Activated CD4-positive, alpha-beta memory T cell treated with anti-CD3 and anti-CD28 coated beads, Interleukin-2, amount 10 ng/mL, durations not matched to agents 7 days and 5 days (primary cell): ENCODE measurements at regions of chrX and their contacts with region 1.

Region 1: DNA sequence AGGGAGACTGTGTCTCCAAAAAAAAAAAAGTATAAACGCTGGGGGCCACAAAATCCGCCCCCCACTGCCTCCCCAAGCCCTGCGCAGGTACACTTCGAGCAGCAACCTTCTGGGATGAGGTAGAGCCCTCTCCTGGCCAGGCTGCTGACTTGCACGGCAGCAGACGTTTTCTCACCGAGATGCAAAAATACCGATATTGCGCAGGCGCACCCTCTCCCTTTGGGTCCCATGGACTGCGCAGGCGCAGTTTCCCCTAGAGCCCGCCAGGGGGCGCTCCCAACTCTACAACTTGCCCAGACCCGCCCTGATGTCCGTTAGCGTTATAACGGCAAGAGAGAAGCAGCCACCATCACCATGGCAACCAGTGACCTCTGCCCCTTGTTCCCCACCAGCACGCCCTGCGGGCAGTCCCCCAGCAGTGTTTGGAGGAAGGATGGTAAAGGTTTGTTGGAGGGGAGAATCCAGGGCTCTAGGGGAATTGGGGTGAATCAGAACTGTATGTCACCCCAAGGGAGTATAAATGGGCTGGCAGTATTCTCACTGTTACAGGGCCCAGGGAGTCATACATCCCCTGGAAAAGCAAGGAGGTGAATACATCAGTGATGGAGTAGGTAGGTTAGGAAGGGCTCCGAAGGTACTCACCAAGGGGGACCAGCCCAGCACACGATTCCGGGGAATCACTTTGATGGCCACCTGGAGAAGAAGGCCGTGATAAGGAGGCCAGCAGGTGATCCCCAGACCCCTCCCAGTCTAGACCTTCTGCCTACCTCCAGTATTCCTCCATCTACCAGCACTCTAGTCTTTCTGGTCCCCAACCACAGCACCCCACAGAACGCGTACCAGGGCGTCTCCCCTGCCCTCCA is 1.5 kb downstream of the PIM2 start:
- DNase-seq: peak; percentile 92
- H3K4me3 Mint-ChIP-seq: peak overlapping the region; percentile 95
- H3K27ac Mint-ChIP-seq: peak overlapping the region; percentile 98
- H3K4me1 Mint-ChIP-seq: peaks cover 55% of the 10 kb centered on the region
- H3K27me3 Mint-ChIP-seq: no peaks in the 10 kb centered on the region

Region 2: DNA sequence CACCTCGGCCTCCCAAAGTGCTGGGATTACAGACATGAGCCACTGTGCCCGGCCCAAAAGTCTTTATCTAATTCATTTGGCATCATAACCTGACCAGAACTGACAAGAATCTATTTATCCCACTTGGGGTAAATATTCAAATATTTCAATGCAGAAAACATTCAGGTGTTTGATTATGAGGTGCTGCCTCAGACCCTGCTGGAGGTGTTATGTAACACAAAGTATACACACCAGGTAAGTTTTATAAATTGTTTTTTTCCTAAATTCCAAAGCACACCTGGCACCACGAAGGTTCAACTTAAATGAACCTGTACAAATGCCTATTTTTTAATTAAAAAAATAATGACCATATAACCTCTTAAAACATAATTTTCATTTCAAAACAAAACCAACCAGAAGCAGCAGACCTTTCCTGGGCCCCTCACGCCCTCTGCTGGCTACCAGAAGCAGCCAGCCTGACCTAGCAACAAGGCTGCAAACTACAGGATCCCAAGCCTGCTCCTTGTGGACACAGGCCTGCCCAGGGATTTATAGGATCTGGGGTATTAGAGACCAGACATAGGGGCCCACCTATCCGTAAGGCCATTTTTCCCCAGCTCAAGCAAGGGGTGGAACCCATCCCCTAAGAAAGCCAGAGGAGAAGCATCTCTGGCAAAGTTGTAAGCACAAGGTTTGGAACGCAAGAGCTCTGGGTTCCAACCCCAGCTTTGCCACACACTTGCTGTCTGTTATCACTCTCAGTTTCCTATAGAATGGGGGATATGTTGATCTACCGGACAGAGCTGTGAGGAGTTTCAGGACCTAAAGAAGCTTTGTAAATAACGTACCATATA is 28.4 kb after region 1 on chrX:
- CTCF ChIA-PET with region 1: interaction called, 4 read pairs
- POLR2A ChIA-PET with region 1: interaction called, 415 read pairs
- DNase-seq: peak; percentile 59
- H3K4me3 Mint-ChIP-seq: no peak overlapping the region
- H3K27ac Mint-ChIP-seq: peak overlapping the region; percentile 68
- H3K4me1 Mint-ChIP-seq: peaks cover 57% of the 10 kb centered on the region
- H3K27me3 Mint-ChIP-seq: no peaks in the 10 kb centered on the region